Left lung (tissue), 14 donors: ENCODE measurements at regions of chr2 and their contacts with region 1.

Region 1: GRCh38 chr2:228699400-228699799 is 517.9 kb upstream of the SPHKAP start:
- DNase-seq: peak in 1 of 4 donors; percentile 57
- ATAC-seq: peak; percentile 40
- H3K4me3 ChIP-seq: no peak overlapping the region
- H3K27ac ChIP-seq: no peak overlapping the region
- H3K4me1 ChIP-seq: no peaks in the 10 kb centered on the region
- H3K27me3 ChIP-seq: no peaks in the 10 kb centered on the region
- CTCF ChIP-seq: no peak

Region 2: GRCh38 chr2:229273723-229274338 is 574.4 kb after region 1 on chr2:
- intact Hi-C with region 1: loop called in 1 of 2 experiments (anchors 10 kb)
- DNase-seq: peak in 3 of 4 donors; percentile 63 to 82 (median 73)
- ATAC-seq: peak; percentile 90
- H3K4me3 ChIP-seq: peak overlapping the region in 1 of 2 donors; percentile 8
- H3K27ac ChIP-seq: peak overlapping the region in 1 of 2 donors; percentile 33
- H3K4me1 ChIP-seq: peaks cover 0 to 2% of the 10 kb centered on the region in 2 donors
- H3K27me3 ChIP-seq: peaks cover 0 to 38% of the 10 kb centered on the region in 2 donors
- CTCF ChIP-seq: peak; percentile 75